ENCODE measurements at regions of chr22 and their contacts with region 1.

Region 1: DNA sequence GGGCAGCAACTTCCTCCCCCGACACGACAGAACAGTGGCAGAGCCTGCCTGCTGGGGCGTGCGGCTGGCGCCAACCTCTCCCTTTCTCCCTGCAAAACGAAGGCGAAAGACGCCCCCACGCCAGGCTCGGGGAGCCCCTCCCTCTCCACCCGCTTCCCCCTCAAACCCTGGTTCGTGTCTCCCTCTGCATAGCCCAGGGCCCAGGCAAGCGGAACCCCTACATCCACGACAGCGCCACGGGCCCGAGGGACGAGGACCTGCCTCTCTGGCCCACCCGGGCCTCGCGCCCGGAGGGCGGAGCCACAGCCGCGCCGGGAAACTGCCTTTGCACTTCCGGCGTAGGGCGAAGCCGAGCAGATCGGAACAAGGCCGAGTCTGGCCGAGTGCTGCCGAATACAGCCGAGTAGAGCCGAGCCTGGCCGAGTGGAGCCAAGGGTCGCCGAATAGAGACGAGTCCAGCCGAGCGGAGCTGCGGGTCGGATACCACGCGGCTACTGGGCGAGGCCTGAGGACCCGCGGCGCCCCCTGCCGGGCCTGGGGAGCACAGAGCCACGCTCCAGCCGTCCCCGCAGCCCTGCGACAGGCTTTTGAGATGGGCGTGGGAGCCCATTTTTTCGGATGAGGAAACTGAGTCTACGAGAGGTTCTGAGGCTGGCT is 11.2 kb upstream of the C1QTNF6 start:
- DNase-seq: peak; percentile 97 to 98
- ATAC-seq: peak; percentile 73 to 75
- H3K4me3 ChIP-seq: peak overlapping the region; percentile 69 to 78 (median 74)
- H3K27ac ChIP-seq: peak overlapping the region; percentile 96 to 99 (median 98)
- H3K4me1 ChIP-seq: peaks cover 30 to 36% of the 10 kb centered on the region in 2 donors
- H3K27me3 ChIP-seq: no peaks in the 10 kb centered on the region
- CTCF ChIP-seq: peak; percentile 93 to 98 (median 97)
- POLR2A ChIP-seq: peak; percentile 99

Region 2: DNA sequence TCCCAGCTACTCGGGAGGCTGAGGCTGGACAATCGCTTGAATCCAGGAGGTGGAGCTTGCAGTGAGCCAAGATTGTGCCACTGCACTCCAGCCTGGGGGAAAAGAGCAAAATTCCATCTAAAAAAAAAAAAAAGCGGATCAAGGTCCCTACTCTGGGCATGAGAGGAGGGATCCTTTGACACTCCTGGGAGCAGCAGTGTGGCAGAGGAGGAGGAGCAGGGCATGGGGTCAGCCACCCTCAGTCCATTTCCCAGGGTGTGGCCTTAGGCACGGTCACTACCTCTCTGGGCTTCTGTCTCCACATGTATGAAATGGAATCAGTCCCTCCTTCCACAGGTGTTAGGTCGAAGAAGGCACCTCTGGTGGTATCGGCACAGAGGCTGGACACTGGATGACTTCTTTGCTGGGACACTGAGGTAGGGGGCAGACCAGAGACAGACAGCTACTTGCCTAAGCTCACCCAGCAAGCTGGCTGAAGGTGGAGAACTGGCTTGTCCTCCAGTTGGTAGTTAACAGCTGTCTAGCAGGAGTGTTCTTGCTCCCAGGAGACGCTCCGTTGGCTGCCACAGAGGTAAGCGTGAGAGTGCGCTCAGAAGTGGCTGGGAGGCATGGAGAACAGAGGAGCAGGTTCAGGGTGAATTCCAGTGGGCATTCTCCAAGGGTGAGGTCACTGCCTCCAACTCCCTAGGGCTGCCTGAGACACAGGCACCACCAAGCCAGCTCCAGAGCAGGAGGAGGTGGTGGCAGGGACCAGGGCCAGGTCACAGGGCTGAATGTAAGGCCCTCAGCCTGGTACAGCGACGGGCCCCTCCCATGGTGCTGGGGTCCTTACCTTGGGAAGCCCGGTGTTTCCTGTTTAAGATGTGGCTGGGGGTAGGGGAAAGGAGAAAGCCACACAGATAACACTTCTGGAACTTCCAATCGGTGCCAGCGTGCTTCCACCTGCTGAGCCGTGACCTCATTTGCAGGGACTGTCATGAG is 737.3 kb before region 1 on chr22:
- in situ Hi-C with region 1: no loop called
- intact Hi-C with region 1: loop called (anchors 10 kb)
- DNase-seq: peak; percentile 50 to 89
- ATAC-seq: peak; percentile 7 to 45
- H3K4me3 ChIP-seq: no peak overlapping the region
- H3K27ac ChIP-seq: peak overlapping the region; percentile 91 to 98 (median 94)
- H3K4me1 ChIP-seq: peaks cover 58 to 68% of the 10 kb centered on the region in 2 donors
- H3K27me3 ChIP-seq: no peaks in the 10 kb centered on the region
- CTCF ChIP-seq: no peak
- POLR2A ChIP-seq: peak in 1 of 2 donors; percentile 21

Region 3: DNA sequence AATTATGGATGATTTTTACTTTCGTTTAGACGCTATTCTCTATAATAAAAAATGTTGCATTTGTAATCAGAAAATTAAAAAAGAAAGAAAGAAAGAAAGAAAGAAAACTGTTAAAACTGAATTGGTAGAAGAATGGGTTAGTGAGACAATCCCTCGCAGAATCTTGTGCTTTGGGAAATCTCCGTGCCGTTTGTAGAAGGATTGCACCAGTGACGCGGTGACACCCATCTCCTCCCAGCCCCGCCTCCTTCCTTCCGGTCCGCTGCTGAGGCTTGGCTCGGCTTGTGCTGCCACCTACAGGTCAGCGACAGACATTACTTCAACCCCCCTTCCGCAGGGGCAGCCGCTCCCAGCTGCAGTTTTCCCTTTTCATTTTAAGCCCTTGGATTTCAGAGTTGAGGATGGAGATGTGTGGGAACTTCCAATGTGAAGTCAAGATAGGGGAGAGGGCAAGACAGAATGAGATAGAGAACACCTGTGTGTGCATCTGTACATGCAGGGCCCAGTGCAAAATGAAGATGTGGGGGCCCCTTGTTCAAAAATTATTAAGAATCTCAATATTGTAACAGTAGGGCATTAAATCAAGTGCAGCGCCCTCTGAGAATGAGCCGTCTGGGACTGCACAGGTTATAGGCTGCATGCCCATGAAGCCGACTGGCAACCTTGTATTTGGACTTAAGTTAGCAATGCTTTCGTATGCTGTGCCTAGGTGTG is 221.1 kb before region 1 on chr22:
- in situ Hi-C with region 1: no loop called
- intact Hi-C with region 1: loop called (anchors 1 kb)
- DNase-seq: peak; percentile 79 to 80
- ATAC-seq: peak; percentile 92 to 94
- H3K4me3 ChIP-seq: peak overlapping the region; percentile 47 to 51 (median 50)
- H3K27ac ChIP-seq: no peak overlapping the region
- H3K4me1 ChIP-seq: peaks cover 0 to 5% of the 10 kb centered on the region in 2 donors
- H3K27me3 ChIP-seq: peaks cover 1 to 15% (median 2%) of the 10 kb centered on the region in 3 donors
- CTCF ChIP-seq: peak; percentile 85 to 94 (median 89)
- POLR2A ChIP-seq: no peak

Region 4: GRCh38 chr22:37077884-37078485 is 121.2 kb before region 1 on chr22:
- in situ Hi-C with region 1: loop called in 1 of 4 experiments (anchors 25 kb)
- intact Hi-C with region 1: loop called (anchors 1 kb)
- DNase-seq: peak in 1 of 2 donors; percentile 21
- ATAC-seq: peak in 1 of 2 donors; percentile 36
- H3K4me3 ChIP-seq: no peak overlapping the region
- H3K27ac ChIP-seq: no peak overlapping the region
- H3K4me1 ChIP-seq: no peaks in the 10 kb centered on the region
- H3K27me3 ChIP-seq: peaks cover 7 to 18% (median 12%) of the 10 kb centered on the region in 3 donors
- CTCF ChIP-seq: peak; percentile 68 to 95 (median 84)
- POLR2A ChIP-seq: no peak

Region 5: GRCh38 chr22:37166675-37167066 is 32.6 kb before region 1 on chr22:
- in situ Hi-C with region 1: loop called in 2 of 4 experiments (anchors 5 kb)
- intact Hi-C with region 1: loop called (anchors 1 kb)
- DNase-seq: peak; percentile 77 to 85
- ATAC-seq: peak; percentile 96
- H3K4me3 ChIP-seq: peak overlapping the region in 1 of 4 donors; percentile 20
- H3K27ac ChIP-seq: peak overlapping the region in 2 of 4 donors; percentile 30 to 64
- H3K4me1 ChIP-seq: peaks cover 4 to 8% of the 10 kb centered on the region in 2 donors
- H3K27me3 ChIP-seq: peaks cover 0 to 3% (median 0%) of the 10 kb centered on the region in 3 donors
- CTCF ChIP-seq: peak in 4 of 5 experiments; percentile 94 to 96 (median 96)
- POLR2A ChIP-seq: no peak

Region 6: DNA sequence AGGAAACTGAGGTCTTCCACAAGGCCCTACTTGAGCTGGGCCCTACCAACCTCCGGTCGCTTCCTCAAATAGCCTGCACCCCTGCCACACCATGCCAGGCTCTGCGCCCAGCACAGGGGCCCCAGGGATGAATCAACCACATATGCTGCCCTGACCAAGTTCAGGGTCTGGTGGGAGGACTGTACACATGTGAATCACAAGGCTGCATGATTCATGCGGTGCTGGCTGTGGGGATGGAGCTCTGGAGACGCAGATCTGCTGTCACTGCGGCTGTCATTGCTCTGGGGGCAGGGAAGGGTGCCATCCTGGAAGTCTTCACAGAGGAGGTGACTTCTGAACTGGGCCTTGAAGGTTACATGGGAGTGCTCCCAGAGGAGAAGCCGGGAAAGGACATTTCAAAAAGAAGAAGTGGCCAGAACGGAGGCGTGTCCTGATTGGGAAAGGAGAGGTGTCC is 104.6 kb after region 1 on chr22:
- in situ Hi-C with region 1: no loop called
- intact Hi-C with region 1: no loop called
- DNase-seq: no peak
- ATAC-seq: no peak
- H3K4me3 ChIP-seq: no peak overlapping the region
- H3K27ac ChIP-seq: no peak overlapping the region
- H3K4me1 ChIP-seq: no peaks in the 10 kb centered on the region
- H3K27me3 ChIP-seq: peaks cover 0 to 10% (median 0%) of the 10 kb centered on the region in 3 donors
- CTCF ChIP-seq: no peak
- POLR2A ChIP-seq: no peak

Region 7: GRCh38 chr22:37676736-37677492 is 477.7 kb after region 1 on chr22:
- in situ Hi-C with region 1: no loop called
- intact Hi-C with region 1: loop called (anchors 5 kb)
- DNase-seq: peak; percentile 73 to 87
- ATAC-seq: peak; percentile 32 to 38
- H3K4me3 ChIP-seq: peak overlapping the region; percentile 57 to 74 (median 70)
- H3K27ac ChIP-seq: peak overlapping the region; percentile 88 to 95 (median 91)
- H3K4me1 ChIP-seq: peaks cover 41 to 43% of the 10 kb centered on the region in 2 donors
- H3K27me3 ChIP-seq: no peaks in the 10 kb centered on the region
- CTCF ChIP-seq: no peak
- POLR2A ChIP-seq: peak; percentile 46 to 50

Measured in gastrocnemius medialis (tissue), 4 donors.